ENCODE measurements at regions of chr10 and their contacts with region 1.

Region 1: DNA sequence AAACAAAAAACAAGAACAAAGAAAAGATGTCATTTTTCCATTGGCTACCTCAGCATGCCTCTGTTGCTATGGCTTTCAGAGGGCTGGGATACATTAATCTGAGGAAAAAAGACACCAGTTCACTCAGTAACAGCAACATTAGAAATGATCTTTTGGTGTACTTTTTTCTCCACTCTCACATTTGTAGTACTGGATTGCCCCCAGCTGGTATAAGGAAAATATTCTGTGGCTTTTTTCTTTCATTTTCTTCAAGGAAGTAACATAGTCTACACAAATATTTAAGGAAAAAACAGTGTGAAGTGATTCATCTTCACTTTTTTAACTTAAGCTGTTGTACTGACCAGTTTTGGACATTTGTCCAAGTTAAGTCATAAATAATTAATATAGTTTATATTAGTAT is 482.3 kb downstream of the SORCS1 start:
- DNase-seq: no peak
- H3K4me3 ChIP-seq: no peak overlapping the region
- H3K27ac ChIP-seq: no peak overlapping the region
- H3K27me3 ChIP-seq: no peaks in the 10 kb centered on the region
- CTCF ChIP-seq: peak in 54 of 56 donors; percentile 25 to 81 (median 49)

Region 2: GRCh38 chr10:106625751-106626150 is 56.4 kb before region 1 on chr10:
- intact Hi-C with region 1: loop called (anchors 2 to 5 kb)
- DNase-seq: no peak
- H3K4me3 ChIP-seq: no peak overlapping the region
- H3K27ac ChIP-seq: no peak overlapping the region
- H3K27me3 ChIP-seq: no peaks in the 10 kb centered on the region
- CTCF ChIP-seq: no peak

Region 3: DNA sequence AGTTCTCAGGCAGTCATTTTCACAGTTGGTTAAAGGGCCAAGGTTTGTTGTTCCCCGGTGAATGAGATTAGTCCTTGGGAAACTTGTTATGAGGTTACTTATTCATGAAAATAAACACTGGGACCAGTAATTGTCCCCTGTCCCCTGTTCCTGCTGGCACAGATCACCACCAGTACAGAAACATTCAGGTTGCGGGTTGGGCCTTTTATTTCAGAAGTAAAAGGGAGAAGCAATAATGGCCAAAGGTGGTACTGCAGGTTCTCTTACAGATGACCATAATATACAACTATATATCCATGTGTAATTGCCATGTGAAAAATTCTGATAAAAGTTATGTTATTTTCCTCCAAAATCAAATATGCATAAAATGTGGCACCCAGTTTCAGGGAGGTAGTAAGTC is 40.3 kb after region 1 on chr10:
- intact Hi-C with region 1: no loop called
- DNase-seq: no peak
- H3K4me3 ChIP-seq: no peak overlapping the region
- H3K27ac ChIP-seq: no peak overlapping the region
- H3K27me3 ChIP-seq: no peaks in the 10 kb centered on the region
- CTCF ChIP-seq: peak in 13 of 56 donors; percentile 9 to 35 (median 18)

Measured in dorsolateral prefrontal cortex (tissue), 120 donors.